ENCODE measurements at regions of chr19 and their contacts with region 1.

Region 1: GRCh38 chr19:39187559-39187957 is 9.2 kb upstream of the NCCRP1 start:
- DNase-seq: no peak
- ATAC-seq: peak; percentile 22

Region 2: DNA sequence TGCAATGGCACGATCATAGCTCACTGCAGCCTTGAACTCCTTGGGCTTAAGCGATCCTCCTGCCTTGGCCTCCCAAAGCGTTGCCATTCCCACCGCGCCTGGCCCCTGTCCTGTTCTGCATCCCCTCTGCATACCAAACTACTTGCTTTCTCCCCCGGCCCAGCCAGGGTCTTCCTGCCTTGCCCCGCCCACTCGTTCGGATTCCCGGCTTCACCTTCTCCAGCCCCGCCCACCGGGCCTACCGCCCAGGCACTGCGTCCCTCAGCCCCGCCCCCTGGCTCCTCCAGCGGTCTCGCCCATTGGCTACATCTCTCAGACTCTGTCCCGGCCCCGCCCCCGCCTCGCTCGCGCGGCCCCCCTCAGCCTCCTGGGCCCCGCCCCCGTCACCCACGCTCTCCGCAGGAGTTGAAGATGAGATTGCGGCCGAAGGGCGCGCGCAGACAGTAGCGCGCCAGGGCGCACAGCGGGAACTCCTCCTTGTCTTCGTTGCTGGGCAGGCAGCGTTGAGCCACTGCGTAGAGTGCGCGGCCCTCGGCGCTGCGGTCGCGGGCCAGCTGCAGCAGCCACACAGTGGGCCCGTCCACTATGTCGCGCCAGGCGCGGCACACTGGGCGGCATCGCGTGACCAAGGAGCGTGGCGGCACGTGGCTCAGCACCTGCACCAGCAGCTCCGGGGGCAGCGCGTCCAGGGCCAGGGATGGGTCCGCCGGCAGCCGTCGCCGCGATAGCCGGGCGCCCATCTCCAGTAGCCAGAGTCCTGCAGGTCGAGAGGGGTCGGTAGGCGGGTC is 237.8 kb before region 1 on chr19:
- intact Hi-C with region 1: loop called (anchors 10 kb)
- DNase-seq: peak; percentile 92
- ATAC-seq: peak; percentile 95

Region 3: DNA sequence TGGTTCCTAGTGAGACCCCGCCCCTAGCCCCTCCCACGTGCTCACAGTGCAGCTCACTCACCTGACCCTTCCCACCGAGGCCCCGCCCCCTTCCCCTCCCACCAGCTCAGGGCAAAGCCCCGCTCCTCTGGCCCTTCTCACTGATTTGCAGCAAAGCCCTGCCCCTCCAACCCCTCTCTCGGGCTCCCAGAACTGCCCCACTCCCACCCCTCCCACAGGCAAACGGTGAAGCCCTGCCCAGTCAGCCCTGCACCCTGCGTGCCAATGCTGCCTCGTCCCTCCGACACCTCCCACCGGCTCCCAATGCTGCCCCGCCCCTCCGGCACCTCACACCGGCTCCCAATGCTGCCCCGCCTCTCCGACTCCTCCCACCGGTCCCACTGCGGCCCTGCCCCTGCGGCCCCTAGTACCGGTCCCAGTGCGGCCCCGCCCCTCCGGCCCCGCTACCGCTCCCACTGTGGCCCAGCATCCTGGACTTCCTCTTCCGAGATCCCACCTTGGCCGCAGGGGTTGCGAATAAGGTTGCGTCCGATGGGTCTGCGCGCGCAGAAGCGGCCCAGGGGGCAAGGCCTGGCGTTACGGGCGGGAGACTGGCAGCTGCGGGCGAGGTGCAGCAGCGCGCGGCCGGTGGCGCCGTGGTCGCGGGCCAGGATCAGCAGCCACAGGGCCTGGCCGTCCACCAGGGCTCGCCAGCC is 156.0 kb before region 1 on chr19:
- intact Hi-C with region 1: no loop called
- DNase-seq: peak; percentile 86
- ATAC-seq: peak; percentile 84

Region 4: GRCh38 chr19:39098365-39099269 is 88.9 kb before region 1 on chr19:
- intact Hi-C with region 1: no loop called
- DNase-seq: no peak
- ATAC-seq: no peak

Region 5: DNA sequence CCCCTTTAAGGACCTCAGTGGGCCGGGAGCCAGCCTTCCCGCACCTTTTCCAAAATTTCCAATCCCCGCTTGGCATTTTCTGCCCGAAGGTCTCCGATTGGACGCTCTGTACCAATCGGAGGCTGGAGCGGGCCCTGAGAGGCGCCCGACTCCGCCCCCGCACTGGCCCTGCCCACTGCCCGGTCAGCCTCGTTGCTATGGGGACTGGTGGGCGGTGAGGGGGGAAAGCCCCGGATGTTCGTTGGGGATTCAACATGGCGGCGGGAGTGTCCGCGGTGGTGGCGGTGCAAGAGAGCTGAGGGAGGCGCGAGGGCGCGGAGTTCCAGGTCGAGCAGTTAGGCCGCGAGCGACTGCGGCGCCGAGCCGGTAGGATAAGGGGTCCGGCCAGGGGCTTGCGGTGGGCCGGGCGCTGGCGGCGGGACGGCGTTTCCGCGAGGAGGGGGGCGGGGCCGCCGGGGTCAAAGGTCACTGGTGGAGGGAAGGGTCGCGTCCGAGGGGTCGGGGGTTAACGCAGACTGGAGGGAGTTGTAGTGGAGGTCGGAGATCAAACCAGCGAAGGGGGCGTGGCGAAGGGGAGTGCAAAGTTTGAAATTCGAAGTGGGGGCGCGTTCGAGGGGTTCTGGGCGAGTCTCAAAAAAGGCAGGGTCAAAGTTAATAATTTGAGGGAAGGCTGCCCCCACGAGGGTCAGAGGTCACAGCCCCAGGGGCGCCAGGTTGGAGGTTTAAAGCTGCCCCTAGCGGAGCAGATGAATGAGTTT is 61.8 kb before region 1 on chr19 and contains the start of gene PAK4:
- intact Hi-C with region 1: loop called (anchors 10 kb)
- DNase-seq: peak; percentile 99
- ATAC-seq: peak; percentile 99
- total RNA-seq, gene PAK4: 43.5 TPM

Region 6: GRCh38 chr19:39166571-39167391 is 20.8 kb before region 1 on chr19:
- intact Hi-C with region 1: no loop called
- DNase-seq: peak; percentile 82
- ATAC-seq: peak; percentile 40